Psoas muscle (tissue), 8 donors: ENCODE measurements at regions of chr18 and their contacts with region 1.

Region 1: DNA sequence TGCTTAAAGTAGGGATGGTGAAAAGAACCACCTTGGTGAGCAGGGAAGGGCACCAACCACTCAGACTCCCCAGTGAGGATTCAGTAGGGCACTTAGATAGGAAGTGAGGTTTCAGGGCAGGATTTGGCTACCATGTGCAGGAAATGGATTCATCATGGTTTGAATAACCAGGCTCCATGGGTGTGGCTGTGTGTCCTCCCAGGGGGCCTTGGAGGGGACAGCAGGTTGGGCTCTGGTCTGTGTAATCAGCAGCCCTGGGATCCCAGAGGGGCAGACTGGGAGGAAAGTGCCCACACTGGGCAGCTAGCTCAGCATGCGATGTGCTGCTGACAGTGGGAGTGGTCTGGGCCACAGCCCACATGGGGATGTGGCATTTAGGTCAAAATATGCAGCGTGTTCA is 224.6 kb downstream of the CELF4 start:
- DNase-seq: no peak
- ATAC-seq: no peak
- H3K4me3 ChIP-seq: no peak overlapping the region
- H3K27ac ChIP-seq: no peak overlapping the region
- H3K4me1 ChIP-seq: no peaks in the 10 kb centered on the region
- H3K27me3 ChIP-seq: peaks cover 0 to 11% (median 3%) of the 10 kb centered on the region in 3 donors
- CTCF ChIP-seq: no peak

Region 2: DNA sequence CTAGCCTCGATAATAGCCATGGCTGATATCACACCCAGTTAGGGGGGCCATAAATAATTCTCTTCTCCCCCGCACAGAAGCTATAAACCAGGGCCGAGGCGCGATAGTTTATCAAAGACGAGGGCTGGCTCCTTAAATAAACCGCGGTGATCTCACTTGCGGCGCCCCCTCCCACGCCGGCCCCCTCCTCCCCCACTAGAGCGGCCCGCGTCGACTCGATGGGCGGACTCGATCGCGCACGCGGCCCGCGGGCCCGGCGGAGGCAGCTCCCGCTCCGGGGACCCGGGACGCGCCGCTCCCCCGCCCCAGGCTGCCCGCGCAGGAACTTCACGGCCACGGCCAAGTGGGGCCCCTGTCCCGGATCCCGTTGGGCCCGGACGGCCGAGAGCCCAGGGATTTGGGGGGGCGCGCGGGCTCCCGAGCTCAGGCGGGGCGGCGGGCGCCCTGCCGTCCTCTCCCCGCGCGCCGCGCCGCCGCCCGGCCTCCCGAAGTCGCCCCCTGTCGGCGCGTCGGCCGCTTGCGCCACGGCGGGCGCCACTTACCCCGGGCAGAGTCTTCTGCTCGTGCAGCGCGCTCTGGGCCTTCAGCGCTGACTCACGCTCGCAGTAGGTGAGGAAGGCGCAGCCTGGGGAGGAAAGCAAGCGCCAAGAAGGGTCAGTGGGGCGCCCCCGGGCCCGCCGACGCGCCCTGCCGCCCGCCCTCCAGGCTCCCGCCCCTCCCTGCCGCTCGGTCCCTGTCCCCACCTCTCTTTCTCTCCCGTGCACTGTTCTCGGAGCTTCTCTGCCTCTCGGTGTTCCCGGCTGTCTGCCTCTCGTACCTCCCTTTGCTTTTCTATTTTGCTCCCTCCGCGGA is 144.2 kb after region 1 on chr18:
- intact Hi-C with region 1: loop called in 1 of 2 experiments (anchors 5 kb)
- DNase-seq: peak in 1 of 2 donors; percentile 19
- ATAC-seq: peak; percentile 73 to 80 (median 78)
- H3K4me3 ChIP-seq: peak overlapping the region; percentile 55
- H3K27ac ChIP-seq: no peak overlapping the region
- H3K4me1 ChIP-seq: no peaks in the 10 kb centered on the region
- H3K27me3 ChIP-seq: peaks cover 0 to 80% (median 30%) of the 10 kb centered on the region in 3 donors
- CTCF ChIP-seq: peak; percentile 45